HepG2 (cell line): ENCODE measurements at regions of chr5 and their contacts with region 1.

Region 1: DNA sequence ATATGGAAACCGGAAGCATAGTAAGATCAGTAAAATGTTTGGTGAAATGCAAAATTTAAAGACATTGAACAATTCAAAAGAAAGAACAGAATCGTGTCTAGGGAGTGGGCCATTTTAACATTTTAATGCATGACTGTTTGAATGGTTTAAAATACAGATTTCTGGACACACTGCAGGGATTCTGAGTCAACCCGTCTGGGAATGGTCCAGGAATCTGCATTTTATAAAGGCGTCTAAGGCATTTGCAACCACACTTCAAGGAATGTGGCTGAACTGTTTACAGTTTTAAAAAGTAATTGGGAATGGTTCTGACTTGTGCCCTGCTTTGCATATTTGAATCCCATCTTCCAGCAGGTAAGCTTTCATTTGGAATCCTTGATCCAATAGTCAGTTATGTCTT is 811.7 kb upstream of the WWC1 start:
- DNase-seq: no peak
- ATAC-seq: no peak
- H3K4me3 ChIP-seq: no peak overlapping the region
- H3K27ac ChIP-seq: no peak overlapping the region
- H3K4me1 ChIP-seq: no peaks in the 10 kb centered on the region
- H3K27me3 ChIP-seq: no peaks in the 10 kb centered on the region
- CTCF ChIP-seq: no peak
- EP300 ChIP-seq: no peak
- POLR2A ChIP-seq: no peak
- RAD21 ChIP-seq: no peak

Region 2: DNA sequence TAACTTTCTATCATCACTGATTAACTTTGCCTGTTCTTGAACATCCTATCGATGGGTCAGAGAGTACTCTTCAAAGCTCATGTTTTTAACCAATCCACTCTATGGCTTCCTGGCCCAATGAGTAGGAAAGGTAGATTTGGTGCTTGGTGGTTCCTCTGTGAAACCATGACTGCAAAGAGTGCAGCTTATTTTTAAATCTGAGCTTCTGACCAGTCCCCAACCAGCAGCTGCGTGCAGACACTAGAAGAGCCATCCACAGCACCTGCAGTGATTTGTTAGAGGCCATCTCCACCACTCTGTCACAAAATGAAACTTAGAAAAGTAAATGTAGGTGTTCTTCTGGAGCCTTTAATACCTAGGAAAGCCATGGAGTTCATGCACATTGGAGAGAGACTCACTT is 704.3 kb after region 1 on chr5:
- CTCF ChIA-PET with region 1: no interaction called
- POLR2A ChIA-PET with region 1: no interaction called
- in situ Hi-C with region 1: no loop called
- intact Hi-C with region 1: loop called (anchors 5 kb)
- DNase-seq: no peak
- ATAC-seq: no peak
- H3K4me3 ChIP-seq: no peak overlapping the region
- H3K27ac ChIP-seq: no peak overlapping the region
- H3K4me1 ChIP-seq: no peaks in the 10 kb centered on the region
- H3K27me3 ChIP-seq: peaks cover 1 to 8% of the 10 kb centered on the region in 2 experiments; a peak in 4 of 5 replicates
- CTCF ChIP-seq: no peak
- EP300 ChIP-seq: no peak
- POLR2A ChIP-seq: no peak
- RAD21 ChIP-seq: no peak